PC-9 (cell line): ENCODE measurements at regions of chr13 and their contacts with region 1.

Region 1: DNA sequence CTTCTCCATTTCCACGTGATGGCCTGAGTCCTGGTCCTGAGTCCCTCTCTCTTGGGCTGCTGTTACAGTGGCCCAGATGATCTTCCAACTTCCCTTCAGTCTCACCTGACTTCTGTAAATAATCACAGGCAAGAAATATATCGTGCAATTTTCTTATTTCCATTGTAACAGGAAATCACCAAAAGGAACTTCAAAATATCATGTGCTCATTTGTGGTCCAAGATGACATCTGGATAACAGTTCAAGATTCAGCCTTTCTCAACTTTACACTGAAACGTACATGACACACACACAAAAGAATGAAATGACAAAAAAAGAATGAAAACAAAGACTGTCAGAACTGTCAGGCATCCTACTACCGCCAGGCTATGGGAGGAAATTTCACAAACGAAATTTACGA is 22.0 kb upstream of the RAP2A start:
- DNase-seq: no peak
- H3K4me3 ChIP-seq: no peak overlapping the region
- H3K27ac ChIP-seq: no peak overlapping the region
- H3K4me1 ChIP-seq: no peaks in the 10 kb centered on the region
- H3K27me3 ChIP-seq: no peaks in the 10 kb centered on the region
- CTCF ChIP-seq: no peak

Region 2: DNA sequence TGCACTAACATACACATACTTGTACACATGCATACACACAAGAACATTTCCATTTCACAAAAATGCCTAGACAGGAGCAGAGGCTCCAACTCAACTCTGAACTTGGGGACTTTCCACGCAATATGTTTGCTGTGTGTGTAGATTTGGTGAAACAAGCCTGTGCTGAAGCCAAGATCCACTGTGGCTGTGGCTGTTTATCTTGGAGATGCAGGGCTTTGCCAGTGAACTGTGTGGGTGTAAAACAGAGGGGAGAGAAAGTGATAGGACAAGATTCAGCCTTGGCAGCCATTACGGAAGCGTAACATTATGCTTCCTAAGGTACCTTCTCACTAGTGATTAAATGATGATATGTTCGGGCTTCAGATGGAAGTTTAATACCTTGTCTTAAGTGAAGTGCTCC is 263.1 kb before region 1 on chr13:
- CTCF ChIA-PET with region 1: interaction called, 13 read pairs
- POLR2A ChIA-PET with region 1: no interaction called
- intact Hi-C with region 1: no loop called
- DNase-seq: no peak
- H3K4me3 ChIP-seq: no peak overlapping the region
- H3K27ac ChIP-seq: no peak overlapping the region
- H3K4me1 ChIP-seq: peaks cover 2% of the 10 kb centered on the region
- H3K27me3 ChIP-seq: no peaks in the 10 kb centered on the region
- CTCF ChIP-seq: no peak

Region 3: DNA sequence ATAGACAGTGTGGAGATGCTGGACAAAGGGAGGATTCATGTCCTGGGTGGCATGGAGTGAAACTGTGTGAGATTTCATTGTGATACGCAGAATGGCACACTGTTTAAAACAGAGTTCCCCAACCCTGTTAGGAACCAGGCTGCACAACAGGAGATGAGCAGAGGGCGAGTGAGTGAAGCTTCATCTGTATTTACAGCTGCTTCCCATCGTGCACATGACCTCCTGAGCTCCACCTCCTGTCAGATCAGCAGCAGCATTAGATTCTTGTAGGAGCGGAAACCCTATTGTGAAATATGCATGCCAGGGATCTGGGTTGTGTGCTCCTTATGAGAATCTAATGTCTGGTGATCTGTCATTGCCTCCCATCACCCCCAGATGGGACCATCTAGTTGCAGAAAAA is 94.5 kb after region 1 on chr13:
- CTCF ChIA-PET with region 1: no interaction called
- POLR2A ChIA-PET with region 1: no interaction called
- intact Hi-C with region 1: no loop called
- DNase-seq: no peak
- H3K4me3 ChIP-seq: no peak overlapping the region
- H3K27ac ChIP-seq: no peak overlapping the region
- H3K4me1 ChIP-seq: no peaks in the 10 kb centered on the region
- H3K27me3 ChIP-seq: peaks cover 9% of the 10 kb centered on the region
- CTCF ChIP-seq: no peak

Region 4: DNA sequence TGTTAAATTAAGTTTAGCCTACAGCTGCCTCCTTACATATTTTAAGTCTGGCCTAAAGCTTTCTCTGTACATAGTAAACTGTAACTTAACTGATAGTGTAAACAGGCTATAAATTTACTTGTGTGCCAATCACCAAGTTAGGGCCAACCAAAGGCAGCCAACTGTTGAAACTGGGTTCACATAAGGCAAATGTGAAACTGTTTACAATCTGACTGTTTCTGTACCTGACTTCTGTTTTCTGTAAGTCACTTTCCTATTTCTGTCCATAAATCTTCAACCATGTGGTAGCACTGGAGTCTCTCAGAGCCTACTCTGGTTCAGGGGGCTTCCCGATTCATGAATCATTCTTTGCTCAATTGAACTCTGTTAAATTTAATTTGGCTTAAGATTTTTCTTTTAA is 125.1 kb after region 1 on chr13:
- CTCF ChIA-PET with region 1: no interaction called
- POLR2A ChIA-PET with region 1: no interaction called
- intact Hi-C with region 1: no loop called
- DNase-seq: peak in 1 of 2 experiments; percentile 31
- H3K4me3 ChIP-seq: no peak overlapping the region
- H3K27ac ChIP-seq: no peak overlapping the region
- H3K4me1 ChIP-seq: no peaks in the 10 kb centered on the region
- H3K27me3 ChIP-seq: no peaks in the 10 kb centered on the region
- CTCF ChIP-seq: no peak